PC-3 (cell line): ENCODE measurements at regions of chr21 and their contacts with region 1.

Region 1: GRCh38 chr21:37145635-37146111 is 72.6 kb downstream of the TTC3 start:
- DNase-seq: peak; percentile 90
- ATAC-seq: peak; percentile 90
- H3K4me3 ChIP-seq: no peak overlapping the region
- H3K27ac ChIP-seq: peak overlapping the region; percentile 61
- H3K4me1 ChIP-seq: peaks cover 12% of the 10 kb centered on the region
- H3K27me3 ChIP-seq: no peaks in the 10 kb centered on the region
- CTCF ChIP-seq: 0 out of 2 replicates have a peak, but pooled peaks have one; percentile 31

Region 2: DNA sequence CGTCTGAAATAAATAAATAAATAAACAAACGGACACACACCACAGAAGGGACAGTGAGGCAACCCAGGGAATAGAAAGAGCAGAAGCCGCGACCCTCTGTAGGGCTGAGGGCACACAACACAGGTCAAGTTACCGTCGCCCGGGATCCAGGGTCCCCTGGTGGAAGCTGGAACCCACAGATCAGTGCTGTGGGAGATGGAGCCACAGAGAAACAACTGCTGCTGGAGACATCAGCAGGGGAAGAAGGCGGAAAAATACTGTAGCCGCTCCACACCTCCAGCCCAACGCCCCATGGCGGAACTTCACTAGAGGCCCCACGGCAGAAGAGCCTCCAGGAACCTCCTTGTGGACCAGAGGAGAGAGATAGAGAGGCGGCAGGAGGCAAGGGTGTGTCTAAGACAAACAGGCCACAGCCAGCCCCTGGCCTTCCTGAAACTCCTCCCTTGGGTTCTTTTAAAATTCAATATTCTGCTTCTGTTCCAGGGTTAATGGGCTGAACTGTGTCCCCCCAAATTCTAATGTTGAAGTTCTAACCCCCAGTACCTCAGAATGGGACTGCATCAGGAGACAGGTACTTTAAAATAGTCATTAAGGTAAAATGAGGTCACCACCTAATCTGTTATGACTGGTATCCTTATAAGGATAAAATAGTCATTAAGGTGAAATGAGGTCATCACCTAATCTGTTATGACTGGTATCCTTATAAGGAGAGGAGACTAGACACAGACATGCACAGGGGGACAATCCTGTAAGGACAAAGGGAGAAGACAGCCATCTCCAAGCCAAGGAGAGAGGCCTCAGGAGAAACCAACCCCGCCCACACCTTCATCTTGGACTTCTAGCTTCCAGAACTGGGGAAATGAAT is 171.5 kb before region 1 on chr21:
- CTCF ChIA-PET with region 1: no interaction called
- POLR2A ChIA-PET with region 1: no interaction called
- intact Hi-C with region 1: no loop called
- DNase-seq: no peak
- ATAC-seq: no peak
- H3K4me3 ChIP-seq: no peak overlapping the region
- H3K27ac ChIP-seq: no peak overlapping the region
- H3K4me1 ChIP-seq: peaks cover 17% of the 10 kb centered on the region
- H3K27me3 ChIP-seq: no peaks in the 10 kb centered on the region
- CTCF ChIP-seq: no peak

Region 3: DNA sequence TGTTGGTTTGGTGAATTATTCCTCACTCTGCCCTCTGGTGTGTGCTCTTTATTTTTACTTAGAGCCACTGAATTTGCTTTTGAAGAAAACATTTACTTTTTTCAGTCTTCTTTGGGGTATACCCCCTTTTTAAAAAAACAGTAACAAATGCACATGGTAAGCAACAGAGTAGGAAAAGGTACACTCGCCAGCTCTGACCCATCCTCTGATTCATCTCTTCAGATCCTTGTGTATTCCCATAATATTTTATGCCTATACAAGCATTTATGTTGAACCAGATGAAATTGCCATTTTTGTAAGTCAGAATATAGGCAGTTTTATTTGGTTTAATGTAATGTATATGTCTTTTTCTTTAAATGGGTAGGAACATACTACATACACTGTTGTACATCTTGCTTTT is 44.3 kb before region 1 on chr21:
- CTCF ChIA-PET with region 1: no interaction called
- POLR2A ChIA-PET with region 1: no interaction called
- intact Hi-C with region 1: loop called (anchors 5 kb)
- DNase-seq: peak; percentile 12
- ATAC-seq: peak; percentile 57
- H3K4me3 ChIP-seq: no peak overlapping the region
- H3K27ac ChIP-seq: no peak overlapping the region
- H3K4me1 ChIP-seq: peaks cover 17% of the 10 kb centered on the region
- H3K27me3 ChIP-seq: no peaks in the 10 kb centered on the region
- CTCF ChIP-seq: no peak